Caco-2 (cell line): ENCODE measurements at regions of chr12 and their contacts with region 1.

Region 1: DNA sequence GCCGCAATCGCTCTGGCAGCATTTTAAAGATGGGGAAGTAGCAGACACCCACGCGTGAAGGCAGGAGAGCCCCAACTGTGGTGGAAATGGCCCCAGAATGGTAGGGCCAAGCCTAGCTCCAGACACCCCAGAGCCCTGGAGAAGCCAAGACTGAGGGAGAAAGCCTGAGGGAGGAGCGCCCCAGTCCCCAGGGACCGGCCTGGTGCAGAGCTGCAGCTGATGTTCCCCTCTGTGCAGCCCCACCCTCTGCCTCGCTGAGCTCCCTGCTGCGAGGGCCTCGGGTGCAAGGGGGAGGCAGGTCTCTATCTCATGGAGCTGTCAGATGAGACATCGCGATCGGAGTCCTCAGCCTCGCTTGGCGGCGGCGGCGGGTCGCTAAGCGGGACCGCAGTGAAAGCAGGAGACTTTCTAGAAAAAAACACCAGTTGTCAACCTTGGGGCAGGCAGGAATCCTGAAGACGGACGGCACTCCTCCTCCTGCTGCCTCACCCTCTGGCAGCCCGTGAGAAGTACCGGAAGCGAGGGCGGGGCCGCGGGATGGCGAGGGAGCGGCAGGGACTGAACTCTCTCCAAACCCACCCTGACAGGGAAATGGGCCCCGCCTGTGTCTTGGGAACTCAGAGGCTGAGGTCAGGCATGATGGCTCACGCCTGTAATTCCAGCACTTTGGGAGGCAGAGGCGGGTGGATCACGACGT is 6.0 kb downstream of the GAPDH start:
- DNase-seq: peak; percentile 66 to 81
- H3K4me3 ChIP-seq: no peak overlapping the region
- H3K4me3 Mint-ChIP-seq: peak overlapping the region; percentile 71
- H3K27ac Mint-ChIP-seq: peak overlapping the region; percentile 97
- H3K4me1 ChIP-seq: peaks cover 31% of the 10 kb centered on the region
- H3K4me1 Mint-ChIP-seq: peaks cover 42% of the 10 kb centered on the region
- H3K27me3 ChIP-seq: no peaks in the 10 kb centered on the region
- H3K27me3 Mint-ChIP-seq: no peaks in the 10 kb centered on the region
- CTCF ChIP-seq: no peak

Region 2: GRCh38 chr12:6423267-6424007 is 116.9 kb before region 1 on chr12:
- CTCF ChIA-PET with region 1: interaction called, 13 read pairs
- POLR2A ChIA-PET with region 1: no interaction called
- intact Hi-C with region 1: loop called (anchors 1 kb)
- DNase-seq: peak; percentile 87
- H3K4me3 ChIP-seq: no peak overlapping the region
- H3K4me3 Mint-ChIP-seq: no peak overlapping the region
- H3K27ac Mint-ChIP-seq: no peak overlapping the region
- H3K4me1 ChIP-seq: peaks cover 8% of the 10 kb centered on the region
- H3K4me1 Mint-ChIP-seq: peaks cover 8% of the 10 kb centered on the region
- H3K27me3 ChIP-seq: no peaks in the 10 kb centered on the region
- H3K27me3 Mint-ChIP-seq: no peaks in the 10 kb centered on the region
- CTCF ChIP-seq: peak; percentile 88 to 97

Region 3: GRCh38 chr12:6528887-6529235 is 11.5 kb before region 1 on chr12:
- CTCF ChIA-PET with region 1: interaction called, 15 read pairs
- POLR2A ChIA-PET with region 1: interaction called, 12 read pairs
- intact Hi-C with region 1: no loop called
- DNase-seq: peak; percentile 92
- H3K4me3 ChIP-seq: no peak overlapping the region
- H3K4me3 Mint-ChIP-seq: peak overlapping the region; percentile 45
- H3K27ac Mint-ChIP-seq: peak overlapping the region; percentile 89
- H3K4me1 ChIP-seq: peaks cover 47% of the 10 kb centered on the region
- H3K4me1 Mint-ChIP-seq: peaks cover 50% of the 10 kb centered on the region
- H3K27me3 ChIP-seq: no peaks in the 10 kb centered on the region
- H3K27me3 Mint-ChIP-seq: no peaks in the 10 kb centered on the region
- CTCF ChIP-seq: no peak

Region 4: DNA sequence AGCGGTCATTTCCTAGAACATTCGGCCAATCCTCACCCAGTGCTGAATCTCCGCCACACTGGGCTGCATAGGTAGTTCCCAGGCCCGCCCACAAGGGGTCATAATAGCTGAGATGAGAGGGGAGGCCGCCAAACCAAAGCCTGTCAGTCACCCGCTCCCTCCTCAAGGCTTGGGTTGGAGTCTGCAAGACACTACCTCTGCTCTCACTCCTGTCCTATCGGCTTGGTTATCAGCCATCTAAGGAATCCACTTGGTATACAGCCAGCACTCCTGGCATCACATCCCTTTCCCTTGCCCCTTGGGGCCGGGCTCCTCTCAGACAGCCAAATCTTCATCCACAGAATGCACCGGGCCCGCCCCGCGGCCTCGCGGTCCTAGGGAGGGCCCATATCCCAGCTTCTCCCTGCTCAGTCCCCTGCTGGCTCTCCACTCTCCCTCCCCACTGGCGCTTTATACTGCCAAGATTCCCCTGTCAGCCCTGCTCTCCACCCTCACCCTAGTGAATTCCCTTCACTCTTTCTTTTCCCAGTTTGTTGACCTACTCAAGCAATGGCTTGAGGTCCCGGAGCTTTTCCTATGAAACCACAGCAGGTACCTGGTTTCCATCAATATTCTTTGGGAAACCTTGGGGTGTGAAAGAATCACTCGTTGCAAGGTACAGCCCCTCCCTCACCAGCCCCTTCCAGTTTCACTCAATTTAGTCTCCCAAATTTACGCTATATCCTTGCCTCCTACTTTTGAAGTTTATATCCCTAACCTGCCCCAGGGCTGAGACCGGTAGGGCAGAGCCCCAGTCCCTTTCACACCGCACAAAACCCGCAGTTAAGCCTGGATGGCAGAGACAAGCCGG is 14.1 kb after region 1 on chr12:
- CTCF ChIA-PET with region 1: interaction called, 16 read pairs
- POLR2A ChIA-PET with region 1: interaction called, 9 read pairs
- intact Hi-C with region 1: no loop called
- DNase-seq: peak; percentile 87 to 91
- H3K4me3 ChIP-seq: no peak overlapping the region
- H3K4me3 Mint-ChIP-seq: no peak overlapping the region
- H3K27ac Mint-ChIP-seq: no peak overlapping the region
- H3K4me1 ChIP-seq: peaks cover 7% of the 10 kb centered on the region; the same call in 1 of the 2 replicates
- H3K4me1 Mint-ChIP-seq: no peaks in the 10 kb centered on the region
- H3K27me3 ChIP-seq: no peaks in the 10 kb centered on the region
- H3K27me3 Mint-ChIP-seq: no peaks in the 10 kb centered on the region
- CTCF ChIP-seq: peak; percentile 78 to 84

Region 5: DNA sequence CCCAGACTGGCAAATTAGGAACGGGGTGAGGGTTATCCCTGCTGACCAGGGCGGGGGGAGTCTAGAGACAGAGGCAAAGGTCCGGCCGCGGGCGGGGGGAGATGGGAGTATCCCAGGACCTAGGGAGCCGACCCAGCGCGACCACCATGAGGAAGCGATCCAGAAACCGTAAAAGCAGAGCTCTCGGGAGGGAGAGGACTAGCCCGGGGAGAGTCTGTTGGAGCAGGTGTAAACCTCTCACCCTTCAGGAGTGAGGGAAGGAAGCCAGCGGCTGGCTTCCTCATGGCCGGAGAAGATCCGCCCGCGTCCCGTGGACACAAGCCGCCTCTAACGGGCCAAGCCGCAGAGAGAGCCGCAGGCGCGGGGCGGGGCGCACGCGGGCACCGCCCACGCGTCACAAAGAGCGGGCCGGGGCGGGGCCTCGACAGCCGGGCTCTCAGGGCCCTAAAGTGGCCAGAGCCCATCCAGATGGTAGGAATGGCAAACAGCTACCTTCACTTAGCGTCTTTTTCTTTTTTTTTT is 106.8 kb after region 1 on chr12 and contains the start of gene ACRBP:
- CTCF ChIA-PET with region 1: no interaction called
- POLR2A ChIA-PET with region 1: no interaction called
- intact Hi-C with region 1: no loop called
- DNase-seq: peak; percentile 62 to 75
- H3K4me3 ChIP-seq: peak within 1 kb of the TSS; percentile 26
- H3K4me3 Mint-ChIP-seq: peak within 1 kb of the TSS; percentile 79
- H3K27ac Mint-ChIP-seq: peak within 1 kb of the TSS; percentile 32
- H3K4me1 ChIP-seq: no peaks in the 10 kb centered on the region
- H3K4me1 Mint-ChIP-seq: peaks cover 7% of the 10 kb centered on the region
- H3K27me3 ChIP-seq: no peaks in the 10 kb centered on the region
- H3K27me3 Mint-ChIP-seq: peaks cover 6% of the 10 kb centered on the region
- CTCF ChIP-seq: no peak
- total RNA-seq, gene ACRBP: 0.73 and 1.3 TPM in 2 replicates

Region 6: DNA sequence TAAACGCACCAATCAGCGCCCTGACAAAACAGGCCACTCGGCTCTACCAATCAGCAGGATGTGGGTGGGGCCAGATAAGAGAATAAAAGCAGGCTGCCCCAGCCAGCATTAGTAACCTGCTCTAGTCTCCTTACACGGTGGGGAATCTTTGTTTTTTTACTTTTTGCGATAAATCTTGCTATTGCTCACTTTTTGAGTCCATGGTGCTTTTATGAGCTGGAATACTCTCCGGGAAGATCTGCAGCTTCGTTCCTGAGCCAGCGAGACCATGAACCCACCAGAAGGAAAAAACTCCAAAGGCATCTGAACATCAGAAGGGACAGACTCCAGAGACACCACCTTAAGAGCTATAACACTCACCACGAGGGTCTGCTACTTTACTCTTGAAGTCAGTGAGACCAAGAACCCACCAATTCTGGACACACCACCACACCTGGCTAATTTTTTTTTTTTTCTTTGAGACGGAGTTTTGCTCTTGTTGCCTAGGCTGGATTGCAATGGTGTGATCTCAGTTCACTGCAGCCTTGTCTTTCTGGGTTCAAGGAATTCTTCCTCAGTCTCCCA is 176.6 kb after region 1 on chr12:
- CTCF ChIA-PET with region 1: no interaction called
- POLR2A ChIA-PET with region 1: no interaction called
- intact Hi-C with region 1: no loop called
- DNase-seq: no peak
- H3K4me3 ChIP-seq: no peak overlapping the region
- H3K4me3 Mint-ChIP-seq: no peak overlapping the region
- H3K27ac Mint-ChIP-seq: no peak overlapping the region
- H3K4me1 ChIP-seq: no peaks in the 10 kb centered on the region
- H3K4me1 Mint-ChIP-seq: no peaks in the 10 kb centered on the region
- H3K27me3 ChIP-seq: no peaks in the 10 kb centered on the region
- H3K27me3 Mint-ChIP-seq: no peaks in the 10 kb centered on the region
- CTCF ChIP-seq: no peak